Right cardiac atrium (tissue), 5 donors: ENCODE measurements at regions of chr6 and their contacts with region 1.

Region 1: GRCh38 chr6:150079604-150080003 is 10.7 kb upstream of the ULBP3 start:
- DNase-seq: no peak
- ATAC-seq: no peak
- H3K4me3 ChIP-seq: no peak overlapping the region
- H3K27ac ChIP-seq: no peak overlapping the region
- H3K4me1 ChIP-seq: no peaks in the 10 kb centered on the region
- H3K27me3 ChIP-seq: no peaks in the 10 kb centered on the region

Region 2: DNA sequence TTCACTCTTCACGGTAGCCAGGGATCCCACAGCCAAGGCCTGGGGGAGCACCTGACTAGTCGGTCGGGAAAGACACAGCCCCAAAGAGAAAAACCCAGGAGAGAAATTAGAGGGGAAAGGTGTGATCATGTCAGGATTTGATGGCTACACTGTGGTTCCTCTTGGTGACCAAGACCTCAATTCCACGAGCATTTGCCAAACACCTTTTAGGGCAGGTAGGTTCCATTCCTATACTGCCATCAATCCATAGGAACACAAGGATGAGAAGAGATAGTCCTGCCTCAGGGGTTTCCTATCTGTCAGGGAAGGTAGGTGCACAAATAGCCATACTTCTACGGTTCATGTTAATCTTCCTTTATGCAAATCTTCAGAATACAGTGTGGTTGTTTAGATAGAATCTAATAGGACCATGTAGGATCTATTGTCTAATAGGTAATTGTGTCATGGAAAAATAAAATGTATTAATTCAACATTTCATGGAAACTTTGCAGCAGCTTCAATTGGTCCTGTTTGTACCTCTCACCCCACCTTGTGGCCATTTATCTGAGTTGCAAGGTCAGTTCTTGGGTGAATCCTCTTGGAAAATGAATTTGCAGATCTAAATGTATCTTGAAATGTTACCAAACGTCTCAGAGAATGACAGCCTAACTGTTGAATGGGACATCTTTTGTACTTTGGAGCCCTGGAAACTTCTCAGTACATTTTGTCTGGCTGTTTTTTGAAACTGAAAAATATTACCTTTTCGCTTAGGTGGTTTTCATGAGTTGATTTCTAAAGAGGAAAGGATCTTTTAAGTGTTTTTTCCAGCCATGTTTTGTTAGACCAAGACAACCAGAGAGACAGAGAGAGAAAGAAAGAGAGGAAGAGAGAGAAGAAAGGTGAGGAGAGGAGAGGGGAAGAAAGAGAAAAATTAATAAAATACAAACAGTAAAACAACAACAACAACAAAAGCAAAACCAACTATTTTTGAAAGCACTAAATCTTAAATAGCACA is 255.5 kb after region 1 on chr6:
- intact Hi-C with region 1: loop called (anchors 1 to 5 kb)
- DNase-seq: no peak
- ATAC-seq: peak in 1 of 2 donors; percentile 48
- H3K4me3 ChIP-seq: no peak overlapping the region
- H3K27ac ChIP-seq: no peak overlapping the region
- H3K4me1 ChIP-seq: no peaks in the 10 kb centered on the region
- H3K27me3 ChIP-seq: no peaks in the 10 kb centered on the region

Region 3: DNA sequence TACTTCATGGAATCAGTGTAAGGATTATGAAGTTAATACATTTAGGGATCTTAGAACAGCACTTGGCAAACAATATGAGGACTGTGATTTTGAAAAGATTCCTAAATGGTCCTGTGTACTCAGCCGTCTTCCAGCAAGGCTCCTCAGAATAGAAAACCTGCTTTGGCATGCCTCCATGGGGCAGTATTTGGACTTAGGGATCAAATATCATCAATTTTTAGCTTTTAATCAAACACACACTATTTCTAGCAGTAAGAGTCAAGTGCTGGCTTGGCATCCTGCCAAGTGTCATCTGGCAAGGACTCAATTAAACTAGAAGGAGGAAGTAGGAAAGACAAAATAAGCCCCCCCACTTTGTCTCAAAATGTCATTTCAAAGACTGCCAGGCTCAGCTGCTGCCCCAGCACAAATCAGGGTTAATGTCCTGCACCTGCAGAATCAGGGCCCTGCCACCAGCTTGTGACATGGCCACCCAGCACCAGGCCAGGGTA is 330.0 kb after region 1 on chr6:
- intact Hi-C with region 1: no loop called
- DNase-seq: peak; percentile 58 to 80 (median 71)
- ATAC-seq: peak; percentile 40 to 41
- H3K4me3 ChIP-seq: no peak overlapping the region
- H3K27ac ChIP-seq: no peak overlapping the region
- H3K4me1 ChIP-seq: peaks cover 8% of the 10 kb centered on the region
- H3K27me3 ChIP-seq: no peaks in the 10 kb centered on the region